ENCODE measurements at regions of chrX and their contacts with region 1.

Region 1: DNA sequence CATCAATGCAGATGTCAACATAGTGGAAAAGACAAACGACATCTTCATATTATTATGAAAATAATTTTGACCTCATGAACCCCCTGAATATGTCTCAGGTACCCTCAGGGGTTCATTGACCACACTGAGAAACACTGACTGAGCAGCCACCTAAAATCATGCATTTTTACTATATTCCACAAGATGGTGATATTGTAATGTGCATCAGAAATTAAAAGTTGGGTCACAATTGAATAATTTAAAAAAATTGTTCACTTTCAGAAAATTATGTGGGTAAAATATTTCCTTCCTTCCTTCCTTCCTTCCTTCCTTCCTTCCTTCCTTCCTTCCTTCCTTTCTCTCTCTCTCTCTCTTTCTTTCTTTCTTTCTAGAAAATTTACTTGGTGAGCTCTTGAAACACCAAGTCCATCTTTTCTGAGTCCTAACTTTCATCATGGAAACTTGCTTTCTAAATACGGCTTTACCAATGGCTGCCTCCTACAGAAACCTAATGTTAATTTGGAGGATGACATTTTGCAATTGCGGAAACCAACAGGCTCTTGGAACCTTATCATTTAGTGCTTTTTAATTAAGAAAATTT is 103.6 kb downstream of the RTL3 start:
- DNase-seq: no peak
- H3K4me3 ChIP-seq: no peak overlapping the region
- H3K4me3 Mint-ChIP-seq: no peak overlapping the region
- H3K27ac Mint-ChIP-seq: no peak overlapping the region
- H3K4me1 ChIP-seq: no peaks in the 10 kb centered on the region
- H3K4me1 Mint-ChIP-seq: no peaks in the 10 kb centered on the region
- H3K27me3 ChIP-seq: no peaks in the 10 kb centered on the region
- H3K27me3 Mint-ChIP-seq: no peaks in the 10 kb centered on the region
- CTCF ChIP-seq: no peak

Region 2: DNA sequence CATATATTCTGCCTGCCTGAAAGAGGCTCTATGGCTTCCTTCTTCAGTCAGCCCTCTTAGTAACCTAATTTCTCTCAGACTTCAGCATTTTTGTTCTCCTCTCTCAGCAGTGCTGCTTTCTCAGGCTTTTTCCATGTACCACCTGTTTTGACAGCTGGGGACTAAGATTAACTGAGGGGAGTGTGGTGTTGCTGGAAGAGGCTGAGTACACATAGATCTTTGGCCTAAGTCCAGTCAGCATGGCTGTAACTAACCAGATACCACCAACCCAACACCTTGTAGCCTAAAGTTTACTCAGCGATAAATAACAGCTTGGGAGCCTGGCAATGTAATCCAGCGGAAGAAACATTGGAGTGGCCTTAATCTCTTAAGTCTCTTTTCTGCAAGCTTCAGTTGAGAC is 18.1 kb after region 1 on chrX:
- CTCF ChIA-PET with region 1: no interaction called
- POLR2A ChIA-PET with region 1: no interaction called
- intact Hi-C with region 1: no loop called
- DNase-seq: no peak
- H3K4me3 ChIP-seq: no peak overlapping the region
- H3K4me3 Mint-ChIP-seq: no peak overlapping the region
- H3K27ac Mint-ChIP-seq: no peak overlapping the region
- H3K4me1 ChIP-seq: no peaks in the 10 kb centered on the region
- H3K4me1 Mint-ChIP-seq: no peaks in the 10 kb centered on the region
- H3K27me3 ChIP-seq: no peaks in the 10 kb centered on the region
- H3K27me3 Mint-ChIP-seq: no peaks in the 10 kb centered on the region
- CTCF ChIP-seq: no peak

Region 3: DNA sequence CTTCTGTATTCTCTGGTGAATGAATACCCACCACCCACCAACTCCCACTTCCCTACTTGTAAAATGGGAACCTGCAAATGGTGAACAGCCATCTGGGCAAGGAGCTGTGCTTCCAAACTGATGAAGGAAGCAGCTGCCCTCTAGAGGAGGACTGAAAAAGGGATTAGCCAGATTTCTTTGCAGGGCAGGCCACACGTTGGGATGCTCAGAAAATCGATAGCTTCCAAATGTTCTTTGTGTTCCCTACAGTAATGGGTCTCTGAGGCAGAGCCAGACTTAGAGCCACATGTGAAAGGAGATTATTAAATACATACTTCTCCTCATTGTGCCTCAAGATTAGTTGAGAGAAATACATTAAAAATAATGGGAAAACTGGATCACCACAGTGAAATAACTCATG is 152.8 kb after region 1 on chrX:
- CTCF ChIA-PET with region 1: no interaction called
- POLR2A ChIA-PET with region 1: no interaction called
- intact Hi-C with region 1: loop called (anchors 10 kb)
- DNase-seq: peak; percentile 9 to 21
- H3K4me3 ChIP-seq: no peak overlapping the region
- H3K4me3 Mint-ChIP-seq: no peak overlapping the region
- H3K27ac Mint-ChIP-seq: no peak overlapping the region
- H3K4me1 ChIP-seq: no peaks in the 10 kb centered on the region
- H3K4me1 Mint-ChIP-seq: no peaks in the 10 kb centered on the region
- H3K27me3 ChIP-seq: no peaks in the 10 kb centered on the region
- H3K27me3 Mint-ChIP-seq: no peaks in the 10 kb centered on the region
- CTCF ChIP-seq: peak in 1 of 2 experiments; percentile 20

Region 4: GRCh38 chrX:78822157-78822690 is 266.7 kb after region 1 on chrX:
- CTCF ChIA-PET with region 1: no interaction called
- POLR2A ChIA-PET with region 1: no interaction called
- intact Hi-C with region 1: no loop called
- DNase-seq: no peak
- H3K4me3 ChIP-seq: no peak overlapping the region
- H3K4me3 Mint-ChIP-seq: no peak overlapping the region
- H3K27ac Mint-ChIP-seq: no peak overlapping the region
- H3K4me1 ChIP-seq: no peaks in the 10 kb centered on the region
- H3K4me1 Mint-ChIP-seq: no peaks in the 10 kb centered on the region
- H3K27me3 ChIP-seq: no peaks in the 10 kb centered on the region
- H3K27me3 Mint-ChIP-seq: no peaks in the 10 kb centered on the region
- CTCF ChIP-seq: no peak

Region 5: DNA sequence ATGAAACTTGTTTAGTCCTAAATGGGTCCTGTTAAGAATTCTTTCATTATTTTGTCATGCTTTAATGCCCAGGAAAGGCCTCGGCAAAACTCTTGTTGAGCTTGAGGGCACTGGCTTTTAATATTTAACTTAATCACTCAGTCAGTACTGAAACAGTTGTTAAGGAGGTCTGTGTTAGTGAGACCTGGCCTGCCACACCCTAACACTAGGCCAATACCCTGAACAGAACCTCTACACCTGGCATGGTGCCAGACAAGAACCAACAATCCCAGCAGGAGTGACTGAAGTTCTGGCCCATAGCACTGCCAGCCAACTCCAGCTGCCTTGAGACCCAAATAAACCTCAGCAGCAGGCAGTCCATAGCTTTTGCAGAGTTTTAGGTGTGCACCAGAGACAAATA is 897.4 kb after region 1 on chrX:
- CTCF ChIA-PET with region 1: no interaction called
- POLR2A ChIA-PET with region 1: no interaction called
- intact Hi-C with region 1: loop called (anchors 10 kb)
- DNase-seq: no peak
- H3K4me3 ChIP-seq: no peak overlapping the region
- H3K4me3 Mint-ChIP-seq: no peak overlapping the region
- H3K27ac Mint-ChIP-seq: no peak overlapping the region
- H3K4me1 ChIP-seq: no peaks in the 10 kb centered on the region
- H3K4me1 Mint-ChIP-seq: no peaks in the 10 kb centered on the region
- H3K27me3 ChIP-seq: no peaks in the 10 kb centered on the region
- H3K27me3 Mint-ChIP-seq: no peaks in the 10 kb centered on the region
- CTCF ChIP-seq: no peak